Activated CD8-positive, alpha-beta memory T cell treated with anti-CD3 and anti-CD28 coated beads, Interleukin-2, amount 10 ng/mL, durations not matched to agents 7 days and 5 days (primary cell): ENCODE measurements at regions of chr12 and their contacts with region 1.

Region 1: DNA sequence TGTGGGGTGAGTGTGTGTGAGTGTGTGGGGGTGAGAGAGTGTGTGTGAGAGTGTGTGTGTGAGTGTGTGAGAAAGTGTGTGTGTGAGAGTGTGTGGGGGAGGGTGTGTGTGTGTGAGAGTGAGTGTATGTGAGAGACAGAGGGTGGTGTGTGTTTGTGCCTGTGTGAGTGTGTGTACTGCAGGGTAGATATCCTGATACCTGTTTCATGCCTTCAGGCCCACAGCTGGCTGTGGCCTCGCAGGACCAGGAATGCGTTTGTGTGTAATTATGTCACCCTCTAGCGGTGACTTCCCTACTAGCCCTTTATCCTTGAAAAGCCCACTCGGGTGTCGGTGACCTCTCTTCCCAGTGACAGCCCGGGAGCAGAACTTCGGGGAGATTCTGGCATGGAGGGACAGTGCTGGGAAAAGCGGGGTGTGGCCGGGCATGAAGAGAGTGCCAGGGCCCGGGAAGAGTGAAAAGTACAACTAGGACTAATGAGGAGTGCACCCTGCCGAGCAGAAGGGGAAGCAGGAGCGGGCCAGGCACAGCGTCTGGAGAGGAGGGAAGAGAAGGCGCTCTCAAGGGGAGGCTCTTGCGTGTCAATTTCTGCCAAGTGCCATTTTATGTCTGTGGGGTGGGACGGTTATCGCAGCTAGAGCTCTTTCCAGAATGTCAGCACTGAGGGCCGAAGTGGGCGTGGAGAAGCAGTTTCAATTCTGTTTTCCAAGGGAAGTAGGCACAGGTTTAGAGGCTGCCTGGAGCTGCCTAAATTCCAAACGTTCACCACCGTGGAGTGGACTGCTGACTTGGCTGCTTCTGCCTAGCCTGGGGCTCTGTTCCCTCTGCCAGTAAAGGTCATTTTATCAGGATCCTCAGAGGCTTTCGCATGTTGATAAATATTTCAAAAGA is 11.0 kb upstream of the FBXL14 start:
- DNase-seq: peak; percentile 72
- ATAC-seq: peak; percentile 60
- H3K4me3 Mint-ChIP-seq: peak overlapping the region; percentile 65
- H3K27ac Mint-ChIP-seq: no peak overlapping the region
- H3K4me1 Mint-ChIP-seq: peaks cover 39% of the 10 kb centered on the region
- H3K27me3 Mint-ChIP-seq: peaks cover 4% of the 10 kb centered on the region

Region 2: DNA sequence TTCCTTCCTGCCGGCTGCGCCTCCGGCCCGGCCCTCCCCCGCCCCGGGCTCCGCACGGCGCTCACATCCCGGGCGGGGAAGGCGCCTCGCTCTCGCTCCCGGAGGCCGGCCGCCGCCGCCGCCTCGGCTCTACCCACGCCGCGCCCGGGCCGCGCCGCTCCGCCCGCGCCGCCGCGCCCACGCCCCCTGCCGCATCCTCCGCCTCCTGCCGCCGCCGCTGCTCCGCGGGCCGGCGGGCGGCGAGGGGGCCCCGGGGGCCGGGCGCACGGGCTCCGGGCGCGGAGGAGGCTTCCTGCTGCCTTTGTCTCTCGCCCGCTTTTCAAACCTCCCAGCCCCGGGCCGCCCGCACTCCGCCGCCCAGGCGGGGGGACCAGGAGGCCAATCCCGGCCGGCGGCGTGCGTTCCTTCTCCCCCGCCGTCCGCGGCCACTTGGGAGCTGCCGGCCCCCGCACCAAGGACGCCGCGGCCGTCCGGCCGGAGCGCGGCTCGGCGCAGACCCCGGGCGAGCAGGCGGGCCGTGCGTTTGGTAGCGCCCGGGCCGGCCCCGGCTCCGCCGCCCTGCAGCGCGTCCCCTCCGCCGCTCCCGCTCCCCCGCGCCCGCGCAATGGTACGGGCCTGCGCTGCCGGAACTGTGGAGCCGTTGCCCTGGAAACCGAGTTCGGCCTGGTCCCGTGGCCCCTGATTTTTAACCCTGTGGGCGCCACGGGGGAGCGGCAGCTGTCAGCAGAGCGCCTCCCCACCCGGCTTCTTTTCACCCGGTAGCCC is 10.9 kb before region 1 on chr12 and contains the start of gene FBXL14:
- CTCF ChIA-PET with region 1: interaction called, 34 read pairs
- DNase-seq: peak; percentile 93
- ATAC-seq: peak; percentile 69
- H3K4me3 Mint-ChIP-seq: peak within 1 kb of the TSS; percentile 87
- H3K27ac Mint-ChIP-seq: peak within 1 kb of the TSS; percentile 92
- H3K4me1 Mint-ChIP-seq: peaks cover 38% of the 10 kb centered on the region
- H3K27me3 Mint-ChIP-seq: no peaks in the 10 kb centered on the region
- total RNA-seq, gene FBXL14: 28.2 to 33.4 TPM

Region 3: DNA sequence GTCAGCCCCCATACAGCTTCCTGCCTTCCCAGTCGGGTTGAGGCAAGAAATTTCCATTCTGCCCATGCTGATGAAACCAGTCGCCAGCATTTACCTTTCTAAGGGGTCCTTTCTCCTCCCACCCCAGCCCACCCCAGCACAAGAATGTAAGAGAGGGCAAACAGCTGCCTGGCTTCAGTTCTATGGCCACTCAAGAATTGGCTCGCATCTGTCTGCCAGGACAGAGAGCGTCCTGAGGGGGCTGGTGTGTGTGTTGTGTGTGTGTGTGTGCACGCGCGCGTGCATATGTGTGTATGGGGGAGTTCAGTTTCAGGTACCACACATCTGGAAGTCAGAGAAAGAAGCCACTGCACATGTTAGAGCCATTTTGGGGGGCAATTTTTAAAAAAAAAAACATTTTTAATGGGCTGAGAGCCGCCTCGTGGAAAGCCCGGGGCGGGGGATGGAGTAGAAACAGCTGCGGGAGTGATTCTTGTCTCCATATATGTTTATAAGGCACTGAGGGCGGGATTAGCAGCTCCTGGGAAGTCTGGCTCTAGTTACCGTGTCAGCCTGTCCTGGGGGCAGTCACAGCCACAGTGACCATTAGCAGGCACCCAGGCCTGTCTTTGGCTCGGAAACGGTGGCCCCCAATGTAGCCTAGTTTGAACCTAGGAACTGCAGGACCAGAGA is 23.4 kb after region 1 on chr12 and contains the start of gene WNT5B:
- CTCF ChIA-PET with region 1: no interaction called
- DNase-seq: no peak
- ATAC-seq: no peak
- H3K4me3 Mint-ChIP-seq: no peak within 1 kb of the TSS
- H3K27ac Mint-ChIP-seq: no peak within 1 kb of the TSS
- H3K4me1 Mint-ChIP-seq: peaks cover 10% of the 10 kb centered on the region
- H3K27me3 Mint-ChIP-seq: peaks cover 74% of the 10 kb centered on the region
- total RNA-seq, gene WNT5B: 0.70 to 5.8 TPM

Region 4: DNA sequence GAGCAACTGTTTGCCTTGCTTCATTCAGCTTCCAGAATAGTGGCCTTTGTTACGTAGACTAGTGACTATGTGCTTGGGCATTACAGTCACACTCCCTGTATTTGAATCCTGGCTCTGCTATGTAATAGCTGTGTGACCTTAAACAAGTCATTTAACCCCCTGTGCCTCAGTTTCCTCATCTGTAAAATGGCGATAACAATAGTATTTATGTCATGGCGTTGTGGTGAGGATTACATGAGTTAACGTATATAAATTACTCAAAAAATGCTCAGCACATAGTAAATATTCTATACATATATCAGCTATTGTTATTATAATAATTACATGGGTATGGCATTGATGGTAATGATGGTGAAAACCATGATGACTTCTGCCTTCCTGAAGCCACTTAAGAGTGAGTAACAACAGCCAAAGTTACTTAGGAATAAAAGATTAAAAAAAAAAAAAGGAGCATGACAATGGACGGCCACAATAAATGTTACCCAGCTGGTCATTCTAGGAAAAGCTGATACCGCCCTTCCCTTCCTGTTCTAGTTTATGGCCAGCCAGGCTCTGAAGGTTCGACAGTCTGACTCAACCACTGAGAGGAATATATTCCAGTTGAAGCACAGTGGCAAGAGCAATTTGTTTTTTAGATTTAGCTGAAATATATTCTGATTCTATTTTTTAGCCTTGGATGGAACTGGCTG is 75.6 kb after region 1 on chr12:
- CTCF ChIA-PET with region 1: no interaction called
- DNase-seq: no peak
- ATAC-seq: no peak
- H3K4me3 Mint-ChIP-seq: no peak overlapping the region
- H3K27ac Mint-ChIP-seq: no peak overlapping the region
- H3K4me1 Mint-ChIP-seq: no peaks in the 10 kb centered on the region
- H3K27me3 Mint-ChIP-seq: peaks cover 5% of the 10 kb centered on the region